ENCODE measurements at regions of chr9 and their contacts with region 1.

Region 1: DNA sequence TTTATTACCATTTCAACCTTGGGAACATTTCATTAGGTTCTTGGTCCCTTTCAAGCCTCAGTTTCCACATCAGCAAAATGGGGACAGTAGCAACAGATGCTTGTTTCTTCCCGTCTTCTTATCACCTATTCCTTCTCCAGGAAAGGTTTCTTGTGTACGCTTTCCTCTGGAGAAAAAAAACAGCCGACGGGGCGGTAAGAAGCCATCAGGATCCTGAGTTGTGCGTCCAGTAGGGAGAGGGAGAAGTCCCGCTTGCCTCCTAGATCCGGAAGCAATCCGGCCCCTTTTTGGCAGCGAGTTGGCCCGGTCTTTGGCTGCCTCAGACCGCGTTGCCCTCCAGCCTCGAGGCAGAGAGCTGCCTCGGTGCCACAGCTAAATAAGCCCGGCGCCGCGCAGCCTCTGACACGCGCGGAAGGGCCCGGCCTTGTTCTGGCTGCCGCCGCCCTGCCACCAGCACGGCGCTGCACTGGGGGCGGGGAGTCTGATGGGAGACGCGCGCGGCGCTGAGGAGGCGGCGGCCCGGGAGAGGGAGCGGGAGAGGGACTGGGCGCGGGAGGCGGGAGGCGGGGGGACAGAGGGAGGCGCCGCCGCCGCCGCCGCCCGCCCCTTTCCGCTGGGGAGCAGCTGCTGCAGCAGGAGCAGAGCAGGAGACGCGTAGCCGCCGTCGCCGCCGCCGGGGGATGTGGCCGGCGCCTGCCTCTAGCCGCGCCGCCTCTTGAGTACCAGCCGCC is at the start of gene SLC44A1:
- DNase-seq: peak; percentile 98
- H3K4me3 ChIP-seq: peak within 1 kb of the TSS; percentile 72 to 92 (median 84)
- H3K27ac ChIP-seq: peak within 1 kb of the TSS; percentile 78 to 84 (median 82)
- H3K4me1 ChIP-seq: peaks cover 0 to 31% (median 18%) of the 10 kb centered on the region in 4 donors
- H3K27me3 ChIP-seq: no peaks in the 10 kb centered on the region
- CTCF ChIP-seq: no peak
- EP300 ChIP-seq: no peak
- POLR2A ChIP-seq: no peak
- total RNA-seq, gene SLC44A1: 19.7 to 35.4 (median 26.0) TPM

Region 2: DNA sequence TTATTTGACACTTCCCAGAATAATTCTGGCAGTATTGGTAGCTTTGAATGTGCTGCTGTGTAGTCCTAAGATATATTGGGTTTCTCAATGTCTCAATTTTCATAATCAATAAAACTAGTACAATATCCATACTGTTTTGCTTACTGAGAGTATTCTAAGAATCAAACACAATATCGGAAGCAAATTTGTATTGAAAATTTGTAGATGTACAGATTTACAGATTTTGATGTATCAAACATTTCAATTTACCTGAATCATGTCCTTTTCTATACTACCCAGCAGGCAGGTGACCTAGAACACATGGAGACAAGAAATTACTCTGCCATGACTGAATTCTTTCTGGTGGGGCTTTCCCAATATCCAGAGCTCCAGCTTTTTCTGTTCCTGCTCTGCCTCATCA is 550.0 kb before region 1 on chr9 and contains the start of gene OR13D1:
- intact Hi-C with region 1: no loop called
- DNase-seq: no peak
- H3K4me3 ChIP-seq: no peak within 1 kb of the TSS
- H3K27ac ChIP-seq: no peak within 1 kb of the TSS
- H3K4me1 ChIP-seq: no peaks in the 10 kb centered on the region
- H3K27me3 ChIP-seq: no peaks in the 10 kb centered on the region
- CTCF ChIP-seq: no peak
- EP300 ChIP-seq: no peak
- POLR2A ChIP-seq: no peak
- total RNA-seq, gene OR13D1: not detected

Region 3: GRCh38 chr9:104836235-104836634 is 407.9 kb before region 1 on chr9:
- intact Hi-C with region 1: no loop called
- DNase-seq: no peak
- H3K4me3 ChIP-seq: no peak overlapping the region
- H3K27ac ChIP-seq: peak overlapping the region in 1 of 4 donors; percentile 43
- H3K4me1 ChIP-seq: peaks cover 0 to 12% (median 4%) of the 10 kb centered on the region in 4 donors
- H3K27me3 ChIP-seq: no peaks in the 10 kb centered on the region
- CTCF ChIP-seq: no peak
- EP300 ChIP-seq: no peak
- POLR2A ChIP-seq: no peak

Region 4: GRCh38 chr9:104863180-104863883 is 380.8 kb before region 1 on chr9:
- intact Hi-C with region 1: loop called (anchors 10 kb)
- DNase-seq: no peak
- H3K4me3 ChIP-seq: no peak overlapping the region
- H3K27ac ChIP-seq: peak overlapping the region; percentile 8 to 79 (median 67)
- H3K4me1 ChIP-seq: peaks cover 0 to 79% (median 75%) of the 10 kb centered on the region in 4 donors
- H3K27me3 ChIP-seq: no peaks in the 10 kb centered on the region
- CTCF ChIP-seq: peak in 3 of 4 experiments; percentile 62 to 70 (median 67)
- EP300 ChIP-seq: no peak
- POLR2A ChIP-seq: no peak

Region 5: DNA sequence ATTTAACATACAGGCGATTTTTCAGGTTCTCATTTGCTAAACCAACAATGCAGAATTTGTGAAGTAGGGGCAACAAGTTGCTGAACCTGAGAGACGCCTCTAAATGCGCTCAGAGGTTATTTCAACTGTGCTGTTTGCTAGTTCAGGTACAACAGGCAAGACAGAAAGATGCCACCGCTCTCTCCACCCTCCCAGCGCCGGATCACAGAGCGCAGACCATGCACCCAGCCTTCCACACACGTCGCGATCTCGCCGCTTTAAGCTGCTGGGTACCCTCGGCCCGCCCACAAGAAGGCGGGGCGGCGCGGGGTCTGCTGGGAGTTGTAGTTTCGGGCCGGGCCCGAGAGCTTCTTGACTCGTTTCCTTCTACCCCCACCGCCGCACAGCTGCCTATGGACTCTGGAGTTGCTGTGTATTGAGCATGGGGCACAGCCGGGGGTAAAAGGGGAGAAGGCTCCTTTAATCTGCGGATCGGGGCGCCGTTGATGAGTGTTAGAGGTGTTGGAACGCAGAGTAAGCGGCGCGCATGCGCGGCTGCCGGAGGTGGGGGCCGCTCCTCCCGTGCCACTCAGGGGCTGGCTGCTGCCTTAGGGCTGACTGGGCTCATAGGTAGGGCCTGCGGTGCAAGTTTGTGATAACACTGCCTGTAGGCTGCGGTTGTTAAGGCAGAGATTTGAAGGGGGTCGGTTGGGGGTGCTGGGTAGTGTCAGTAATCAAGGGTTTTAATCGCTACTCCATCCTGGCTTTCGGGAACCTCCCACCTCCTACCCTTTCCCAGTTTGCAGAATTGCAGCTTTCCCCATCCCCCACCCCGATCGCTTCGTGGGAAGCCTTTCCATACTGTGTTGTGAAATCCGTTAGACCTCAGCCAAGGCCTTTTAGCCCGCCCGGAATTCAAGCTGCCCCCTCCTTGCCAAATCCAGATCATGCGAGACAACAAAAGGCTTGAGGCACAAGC is 275.9 kb before region 1 on chr9:
- intact Hi-C with region 1: loop called (anchors 2 kb)
- DNase-seq: peak; percentile 97
- H3K4me3 ChIP-seq: peak overlapping the region; percentile 46 to 74 (median 64)
- H3K27ac ChIP-seq: peak overlapping the region; percentile 85 to 98 (median 94)
- H3K4me1 ChIP-seq: peaks cover 0 to 40% (median 30%) of the 10 kb centered on the region in 4 donors
- H3K27me3 ChIP-seq: no peaks in the 10 kb centered on the region
- CTCF ChIP-seq: no peak
- EP300 ChIP-seq: peak in 3 of 4 donors; percentile 39 to 82 (median 43)
- POLR2A ChIP-seq: peak; percentile 50 to 54

Region 6: DNA sequence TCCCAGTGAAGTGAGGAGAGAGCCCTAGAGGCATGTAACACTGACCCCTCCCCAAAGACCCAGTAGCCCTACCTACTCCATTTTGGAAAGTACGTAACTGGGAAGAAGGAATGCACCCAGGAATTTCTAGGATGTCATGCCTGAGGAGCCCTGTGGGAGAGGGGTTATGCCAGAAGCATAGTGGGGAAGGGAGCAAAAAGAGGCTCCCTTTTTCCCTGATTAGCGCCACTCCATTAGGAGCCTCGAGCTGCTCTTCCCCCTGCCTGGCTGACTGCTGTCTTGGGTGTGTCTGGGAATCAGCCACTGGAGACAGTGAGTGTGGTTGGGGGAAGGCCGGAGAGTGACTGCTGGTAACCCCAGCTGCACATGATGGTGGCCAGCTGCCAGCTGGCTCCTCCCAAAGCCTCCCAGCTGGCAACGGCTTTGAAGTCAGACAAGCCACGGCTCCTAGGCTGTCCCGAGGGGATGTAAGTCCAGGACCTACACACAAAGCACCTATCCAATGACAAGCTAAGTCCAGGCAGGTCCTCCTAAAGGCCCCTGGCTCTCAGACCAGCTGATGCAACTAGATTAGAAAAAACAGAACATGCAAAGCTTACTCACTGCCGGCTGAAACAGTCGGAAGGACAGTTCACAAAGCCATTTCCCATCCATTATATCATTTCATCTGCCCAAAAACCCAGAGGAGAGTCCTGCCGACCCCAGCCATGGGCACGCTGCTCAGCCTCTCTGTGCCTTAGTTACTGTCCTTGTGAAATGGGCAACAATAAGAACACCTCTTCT is 179.7 kb before region 1 on chr9:
- intact Hi-C with region 1: loop called (anchors 5 kb)
- DNase-seq: peak; percentile 99
- H3K4me3 ChIP-seq: no peak overlapping the region
- H3K27ac ChIP-seq: peak overlapping the region; percentile 83 to 87 (median 87)
- H3K4me1 ChIP-seq: peaks cover 0 to 38% (median 26%) of the 10 kb centered on the region in 4 donors
- H3K27me3 ChIP-seq: no peaks in the 10 kb centered on the region
- CTCF ChIP-seq: no peak
- EP300 ChIP-seq: peak; percentile 68 to 89 (median 86)
- POLR2A ChIP-seq: peak; percentile 24 to 47

Region 7: GRCh38 chr9:105093685-105094084 is 150.5 kb before region 1 on chr9:
- intact Hi-C with region 1: no loop called
- DNase-seq: no peak
- H3K4me3 ChIP-seq: no peak overlapping the region
- H3K27ac ChIP-seq: no peak overlapping the region
- H3K4me1 ChIP-seq: no peaks in the 10 kb centered on the region
- H3K27me3 ChIP-seq: no peaks in the 10 kb centered on the region
- CTCF ChIP-seq: no peak
- EP300 ChIP-seq: no peak
- POLR2A ChIP-seq: no peak

Region 8: GRCh38 chr9:105157130-105157583 is 87.0 kb before region 1 on chr9:
- intact Hi-C with region 1: loop called (anchors 2 kb)
- DNase-seq: peak; percentile 95
- H3K4me3 ChIP-seq: no peak overlapping the region
- H3K27ac ChIP-seq: peak overlapping the region; percentile 56 to 79 (median 70)
- H3K4me1 ChIP-seq: peaks cover 0 to 18% (median 16%) of the 10 kb centered on the region in 4 donors
- H3K27me3 ChIP-seq: no peaks in the 10 kb centered on the region
- CTCF ChIP-seq: peak in 3 of 4 experiments; percentile 36 to 58 (median 36)
- EP300 ChIP-seq: peak; percentile 27 to 93 (median 83)
- POLR2A ChIP-seq: no peak

Region 9: GRCh38 chr9:105341434-105342144 is 97.4 kb after region 1 on chr9:
- intact Hi-C with region 1: loop called (anchors 10 kb)
- DNase-seq: no peak
- H3K4me3 ChIP-seq: peak overlapping the region in 3 of 4 donors; percentile 13 to 31 (median 16)
- H3K27ac ChIP-seq: peak overlapping the region in 3 of 4 donors; percentile 7 to 44 (median 38)
- H3K4me1 ChIP-seq: peaks cover 0 to 6% (median 2%) of the 10 kb centered on the region in 4 donors
- H3K27me3 ChIP-seq: no peaks in the 10 kb centered on the region
- CTCF ChIP-seq: no peak
- EP300 ChIP-seq: no peak
- POLR2A ChIP-seq: no peak

Measured in sigmoid colon (tissue), 7 donors.